HepG2 (cell line): ENCODE measurements at regions of chr22 and their contacts with region 1.

Region 1: GRCh38 chr22:49992921-49993648 is 19.5 kb downstream of the IL17REL start:
- DNase-seq: peak; percentile 49
- ATAC-seq: peak; percentile 92
- H3K4me3 ChIP-seq: peak overlapping the region in 1 of 3 experiments; percentile 10; a peak in 1 of 6 replicates
- H3K27ac ChIP-seq: no peak overlapping the region
- H3K4me1 ChIP-seq: peaks cover 7% of the 10 kb centered on the region
- H3K27me3 ChIP-seq: peaks cover 3 to 19% of the 10 kb centered on the region in 2 experiments; a peak in 2 of 5 replicates
- CTCF ChIP-seq: peak; percentile 94
- EP300 ChIP-seq: no peak
- POLR2A ChIP-seq: no peak
- RAD21 ChIP-seq: peak; percentile 79

Region 2: DNA sequence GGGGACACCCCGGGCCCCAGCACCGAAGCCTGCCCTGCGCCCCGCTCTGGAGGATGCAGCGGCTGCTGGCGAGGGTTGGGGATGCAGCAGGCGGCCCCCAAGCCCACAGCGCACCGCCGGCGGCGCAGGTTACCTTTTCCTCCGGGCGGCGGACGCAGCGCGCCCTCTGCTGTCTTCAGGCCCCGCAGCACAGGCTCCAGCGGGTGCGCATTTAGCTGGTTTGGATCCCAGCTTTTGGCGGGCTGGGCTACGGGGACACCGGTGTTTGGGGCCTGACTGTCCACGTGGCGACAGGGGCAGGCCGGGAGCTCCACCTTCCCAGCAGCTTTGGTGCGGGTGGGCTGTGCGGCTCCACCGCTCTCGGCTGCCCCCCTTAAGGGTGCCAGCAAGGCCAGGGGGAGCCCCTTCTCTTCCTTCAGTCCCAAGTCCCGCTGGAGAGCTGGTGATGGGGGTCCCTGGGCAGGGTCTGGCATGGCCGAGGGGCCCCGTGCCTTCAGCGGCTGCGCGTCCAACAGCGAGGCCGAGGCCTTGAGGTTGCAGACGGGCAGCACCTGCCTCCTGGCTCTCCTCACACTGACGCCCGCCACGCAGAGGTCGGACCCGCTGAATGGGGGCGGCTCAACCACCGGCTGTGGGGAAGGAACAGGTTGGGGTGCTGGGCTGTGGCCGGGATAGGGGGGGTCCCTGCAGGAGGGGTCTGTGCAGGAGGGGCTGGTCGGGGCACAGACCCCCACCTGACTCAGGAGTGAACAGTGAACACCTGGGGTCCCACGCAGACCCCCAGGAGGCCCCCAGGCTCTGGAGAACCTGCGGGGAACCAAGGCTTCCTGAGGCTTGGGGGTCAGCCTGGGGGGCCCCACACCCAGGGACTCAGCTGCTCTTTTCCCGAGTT is 37.5 kb after region 1 on chr22:
- CTCF ChIA-PET with region 1: no interaction called
- POLR2A ChIA-PET with region 1: no interaction called
- in situ Hi-C with region 1: no loop called
- intact Hi-C with region 1: loop called (anchors 5 kb)
- DNase-seq: peak; percentile 44
- ATAC-seq: peak; percentile 93
- H3K4me3 ChIP-seq: peak overlapping the region in 1 of 3 experiments; percentile 16; a peak in 1 of 6 replicates
- H3K27ac ChIP-seq: no peak overlapping the region
- H3K4me1 ChIP-seq: no peaks in the 10 kb centered on the region
- H3K27me3 ChIP-seq: peaks cover 8 to 63% of the 10 kb centered on the region in 2 experiments
- CTCF ChIP-seq: peak; percentile 96
- EP300 ChIP-seq: no peak
- POLR2A ChIP-seq: no peak
- RAD21 ChIP-seq: peak; percentile 99